ENCODE measurements at regions of chr15 and their contacts with region 1.

Region 1: GRCh38 chr15:85407804-85408746 is 27.7 kb downstream of the AKAP13 start:
- DNase-seq: peak; percentile 67
- H3K4me3 Mint-ChIP-seq: peak overlapping the region; percentile 58
- H3K27ac Mint-ChIP-seq: peak overlapping the region; percentile 88
- H3K4me1 Mint-ChIP-seq: peaks cover 86% of the 10 kb centered on the region
- H3K27me3 Mint-ChIP-seq: no peaks in the 10 kb centered on the region

Region 2: GRCh38 chr15:85318048-85318731 is 89.9 kb before region 1 on chr15:
- CTCF ChIA-PET with region 1: interaction called, 9 read pairs
- intact Hi-C with region 1: loop called (anchors 1 kb)
- DNase-seq: peak; percentile 40
- H3K4me3 Mint-ChIP-seq: no peak overlapping the region
- H3K27ac Mint-ChIP-seq: no peak overlapping the region
- H3K4me1 Mint-ChIP-seq: peaks cover 43% of the 10 kb centered on the region
- H3K27me3 Mint-ChIP-seq: no peaks in the 10 kb centered on the region

Region 3: DNA sequence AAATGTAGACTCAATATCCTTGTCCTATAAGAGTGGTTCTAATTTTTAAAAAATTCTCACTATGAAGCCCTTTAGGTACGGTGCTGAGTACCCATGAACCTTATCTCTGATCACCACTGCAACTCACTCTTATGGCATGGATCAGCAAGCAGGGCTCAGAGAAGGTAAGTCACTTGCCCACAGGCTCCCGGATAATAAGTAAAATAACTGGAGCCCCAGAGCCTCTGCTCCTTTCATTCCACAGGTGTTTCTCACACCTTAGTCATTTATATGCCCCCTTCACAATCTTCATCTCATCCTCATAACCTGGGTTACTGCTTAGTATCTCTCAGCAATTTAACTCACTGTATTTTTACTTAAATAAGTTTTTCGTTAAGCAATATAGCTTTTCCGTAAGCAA is 56.1 kb before region 1 on chr15:
- CTCF ChIA-PET with region 1: no interaction called
- intact Hi-C with region 1: no loop called
- DNase-seq: no peak
- H3K4me3 Mint-ChIP-seq: no peak overlapping the region
- H3K27ac Mint-ChIP-seq: no peak overlapping the region
- H3K4me1 Mint-ChIP-seq: peaks cover 8% of the 10 kb centered on the region
- H3K27me3 Mint-ChIP-seq: peaks cover 2% of the 10 kb centered on the region

Region 4: DNA sequence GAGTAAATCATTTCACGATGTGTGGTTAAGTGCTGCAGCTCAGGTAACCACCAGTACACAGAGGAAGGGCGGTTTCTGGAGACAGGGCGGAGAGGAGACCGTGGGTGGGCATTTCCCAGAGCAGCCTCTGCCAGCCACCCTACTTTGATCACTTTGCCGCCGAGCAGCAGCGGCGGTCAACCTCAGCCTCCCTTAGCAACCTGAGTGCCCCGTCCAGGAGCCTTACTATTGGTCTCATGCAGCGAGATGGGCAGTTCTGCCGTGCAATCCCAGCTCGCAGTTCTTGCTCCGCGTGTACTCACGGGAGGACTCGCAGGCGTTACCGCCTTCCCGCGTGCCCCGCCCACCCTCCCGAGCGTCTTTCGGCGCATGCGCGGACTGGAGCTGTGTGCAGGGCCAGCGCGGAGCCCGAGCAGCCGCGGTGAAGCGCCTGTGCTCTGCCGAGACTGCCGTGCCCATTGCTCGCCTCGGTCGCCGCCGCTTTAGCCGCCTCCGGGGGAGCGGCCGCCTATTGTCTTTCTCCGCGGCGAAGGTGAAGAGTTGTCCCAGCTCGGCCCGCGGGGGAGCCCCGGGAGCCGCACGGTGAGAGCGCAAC is 27.8 kb before region 1 on chr15 and contains the start of gene AKAP13:
- CTCF ChIA-PET with region 1: interaction called, 30 read pairs
- intact Hi-C with region 1: loop called (anchors 1 kb)
- DNase-seq: peak; percentile 97
- H3K4me3 Mint-ChIP-seq: peak within 1 kb of the TSS; percentile 91
- H3K27ac Mint-ChIP-seq: peak within 1 kb of the TSS; percentile 90
- H3K4me1 Mint-ChIP-seq: peaks cover 51% of the 10 kb centered on the region
- H3K27me3 Mint-ChIP-seq: no peaks in the 10 kb centered on the region
- total RNA-seq, gene AKAP13: 79.4 to 83.2 TPM

Region 5: DNA sequence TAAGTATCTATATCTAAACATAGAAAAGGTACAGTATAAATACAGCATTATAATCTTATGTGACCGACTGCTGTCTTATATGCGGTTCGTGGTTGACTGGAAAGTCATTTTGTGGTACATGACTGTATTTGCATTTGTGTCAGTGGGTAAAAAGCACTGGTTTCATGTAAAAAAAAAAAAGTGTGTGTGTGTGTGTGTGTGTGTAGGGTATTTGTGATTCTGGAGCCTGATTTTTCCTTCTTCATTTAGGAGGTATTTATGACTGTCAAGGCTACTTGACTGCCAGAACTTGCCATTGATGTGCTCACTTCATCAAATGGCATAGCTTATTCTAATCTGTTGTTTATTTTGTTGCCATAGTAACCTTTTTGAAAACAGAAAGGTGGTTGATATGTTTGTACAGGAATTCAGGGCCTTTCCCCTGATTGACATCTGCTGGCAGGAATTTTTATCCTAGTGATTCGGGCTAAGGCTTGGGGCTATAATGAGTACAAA is 35.6 kb after region 1 on chr15:
- CTCF ChIA-PET with region 1: no interaction called
- intact Hi-C with region 1: loop called (anchors 1 kb)
- DNase-seq: peak; percentile 50
- H3K4me3 Mint-ChIP-seq: no peak overlapping the region
- H3K27ac Mint-ChIP-seq: peak overlapping the region; percentile 19
- H3K4me1 Mint-ChIP-seq: peaks cover 48% of the 10 kb centered on the region
- H3K27me3 Mint-ChIP-seq: no peaks in the 10 kb centered on the region

Region 6: GRCh38 chr15:85707519-85708338 is 299.7 kb after region 1 on chr15:
- CTCF ChIA-PET with region 1: no interaction called
- intact Hi-C with region 1: loop called (anchors 1 kb)
- DNase-seq: peak; percentile 51
- H3K4me3 Mint-ChIP-seq: peak overlapping the region; percentile 79
- H3K27ac Mint-ChIP-seq: peak overlapping the region; percentile 99
- H3K4me1 Mint-ChIP-seq: peaks cover 87% of the 10 kb centered on the region
- H3K27me3 Mint-ChIP-seq: no peaks in the 10 kb centered on the region